ENCODE measurements at regions of chr2 and their contacts with region 1.

Region 1: DNA sequence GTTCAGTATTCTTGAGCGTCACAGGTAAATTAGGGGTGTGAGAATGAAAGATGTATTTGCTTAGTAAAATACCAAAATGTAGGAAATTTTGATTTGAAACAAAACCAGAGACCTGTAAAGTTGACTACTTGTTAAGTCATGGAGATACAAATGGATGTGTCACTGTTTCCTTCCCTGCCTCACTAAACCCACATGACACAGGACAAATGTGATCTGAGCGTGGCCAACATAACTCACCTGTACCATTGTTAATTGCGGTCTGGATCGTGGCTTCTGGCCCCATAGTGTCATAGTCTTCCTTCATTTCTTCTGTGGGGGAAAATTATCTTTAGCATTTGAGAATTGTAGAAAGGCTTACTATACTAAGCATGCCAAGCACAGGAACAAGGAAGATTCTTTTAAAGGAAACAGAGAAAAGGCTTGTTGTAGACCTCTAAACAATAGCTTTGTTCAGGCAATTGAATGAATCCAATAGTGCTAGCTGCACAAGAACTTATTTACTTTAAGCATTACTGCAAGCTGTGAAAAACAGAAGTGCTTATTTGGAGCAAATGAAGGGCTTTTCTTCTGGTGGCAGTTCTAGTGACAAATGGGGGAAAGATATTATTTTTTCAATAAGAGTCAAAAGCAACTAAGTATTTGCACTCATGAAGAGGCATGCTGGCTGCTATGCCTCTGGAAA is 95.2 kb downstream of the ZEB2 start:
- DNase-seq: no peak
- H3K4me3 Mint-ChIP-seq: no peak overlapping the region
- H3K27ac Mint-ChIP-seq: peak overlapping the region; percentile 19
- H3K4me1 Mint-ChIP-seq: peaks cover 7% of the 10 kb centered on the region
- H3K27me3 Mint-ChIP-seq: no peaks in the 10 kb centered on the region

Region 2: DNA sequence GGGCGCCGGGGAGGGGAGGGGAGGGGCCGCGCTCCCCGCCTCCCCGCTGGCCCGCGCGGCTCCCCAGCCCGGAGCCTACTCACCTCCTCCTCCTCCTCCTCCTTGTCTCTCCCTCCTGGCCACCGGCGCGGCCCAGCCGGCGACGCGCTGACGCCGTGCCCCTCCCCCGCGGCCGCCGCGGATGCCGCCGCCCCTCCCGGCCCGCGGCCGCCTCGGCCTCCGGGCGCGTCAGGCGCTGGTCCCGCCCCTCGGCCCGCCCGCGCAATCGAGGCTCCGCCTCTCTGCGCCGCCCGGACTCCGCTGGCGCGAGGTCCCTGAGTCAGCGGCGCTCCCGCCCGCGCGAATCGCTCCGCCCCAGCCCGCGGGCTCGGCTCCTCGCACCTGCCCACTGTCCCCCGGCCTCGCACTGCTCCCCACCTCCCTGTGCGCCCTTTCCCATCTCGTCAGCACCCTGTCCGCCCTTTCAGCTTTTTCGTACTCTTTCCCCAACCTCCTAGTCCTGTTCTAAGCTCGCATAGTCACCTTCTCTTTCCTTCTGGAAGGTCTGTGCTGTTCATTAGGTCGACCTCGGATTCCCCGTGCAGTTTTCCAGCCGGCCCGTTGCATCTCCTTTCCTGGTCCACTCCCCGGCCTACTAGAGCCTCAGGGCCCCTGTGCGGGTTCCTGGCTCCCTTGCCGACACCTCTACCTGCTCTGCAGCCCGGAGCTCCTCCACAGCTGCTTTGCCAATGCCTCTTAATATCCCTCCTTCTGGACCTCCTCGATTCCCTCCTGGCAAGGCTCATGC is 92.2 kb before region 1 on chr2:
- intact Hi-C with region 1: no loop called
- DNase-seq: peak; percentile 91
- H3K4me3 Mint-ChIP-seq: peak overlapping the region; percentile 85
- H3K27ac Mint-ChIP-seq: peak overlapping the region; percentile 98
- H3K4me1 Mint-ChIP-seq: peaks cover 48% of the 10 kb centered on the region
- H3K27me3 Mint-ChIP-seq: no peaks in the 10 kb centered on the region

Region 3: GRCh38 chr2:144438801-144439631 is 14.3 kb after region 1 on chr2:
- intact Hi-C with region 1: loop called (anchors 2 kb)
- DNase-seq: no peak
- H3K4me3 Mint-ChIP-seq: no peak overlapping the region
- H3K27ac Mint-ChIP-seq: no peak overlapping the region
- H3K4me1 Mint-ChIP-seq: no peaks in the 10 kb centered on the region
- H3K27me3 Mint-ChIP-seq: peaks cover under 1% of the 10 kb centered on the region

Measured in activated T-helper 1 cell treated with anti-CD3 and anti-CD28 coated beads, Interleukin-12 subunit alpha, Interleukin-12 subunit beta, Interleukin-2, Interleukin-4 antibody, amounts not matched to agents 30 ng/mL and 10 ng/mL and 1 ng/mL, durations not matched to agents 14 hours and 24 hours and 36 hours (primary cell).